Psoas muscle (tissue), 8 donors: ENCODE measurements at regions of chr12 and their contacts with region 1.

Region 1: DNA sequence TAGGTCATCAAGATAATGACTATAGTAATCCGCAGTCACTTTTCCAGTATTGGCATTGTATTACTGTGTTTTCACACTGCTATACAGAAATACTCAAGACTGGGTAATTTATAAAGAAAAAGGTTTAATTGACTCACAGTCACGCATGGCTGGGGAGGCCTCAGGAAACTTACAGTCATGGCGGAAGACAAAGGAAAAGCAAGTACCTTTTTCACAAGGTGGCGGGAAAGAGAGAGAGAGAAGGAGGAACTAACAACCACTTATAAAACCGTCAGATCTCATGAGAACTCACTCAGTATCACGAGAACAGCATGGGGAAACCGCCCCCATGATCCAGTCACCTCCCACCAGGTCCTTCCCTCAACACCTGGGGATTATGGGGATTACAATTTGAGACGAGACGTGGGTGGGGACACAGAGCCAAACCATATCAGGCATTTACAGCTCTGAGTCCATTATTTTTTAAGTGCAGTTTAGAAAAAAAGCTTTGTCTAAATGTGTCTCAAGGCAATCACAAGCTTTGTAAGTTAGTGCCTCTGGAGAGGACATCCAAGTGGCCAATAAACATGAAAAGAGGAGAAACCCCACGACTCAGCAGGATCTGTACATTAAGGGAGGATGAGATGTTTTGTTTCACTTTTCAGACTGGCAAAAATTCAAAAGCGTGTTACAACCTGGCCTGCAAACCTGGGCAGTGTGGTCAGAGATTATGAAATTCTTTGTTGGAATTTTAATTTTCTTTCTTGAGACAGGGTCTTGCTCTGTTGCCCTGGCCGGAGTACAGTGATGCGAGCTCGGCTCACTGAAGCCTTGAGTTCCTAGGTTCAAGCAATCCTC is 82.0 kb downstream of the DNAH10 start:
- DNase-seq: no peak
- ATAC-seq: no peak
- H3K4me3 ChIP-seq: no peak overlapping the region
- H3K27ac ChIP-seq: no peak overlapping the region
- H3K4me1 ChIP-seq: no peaks in the 10 kb centered on the region
- H3K27me3 ChIP-seq: no peaks in the 10 kb centered on the region
- CTCF ChIP-seq: no peak

Region 2: GRCh38 chr12:122304902-122305301 is 1539.2 kb before region 1 on chr12:
- intact Hi-C with region 1: loop called in 1 of 2 experiments (anchors 5 kb)
- DNase-seq: no peak
- ATAC-seq: no peak
- H3K4me3 ChIP-seq: no peak overlapping the region
- H3K27ac ChIP-seq: no peak overlapping the region
- H3K4me1 ChIP-seq: no peaks in the 10 kb centered on the region
- H3K27me3 ChIP-seq: no peaks in the 10 kb centered on the region
- CTCF ChIP-seq: no peak

Region 3: GRCh38 chr12:124680863-124681778 is 837.0 kb after region 1 on chr12:
- intact Hi-C with region 1: loop called in 1 of 2 experiments (anchors 5 kb)
- DNase-seq: peak; percentile 73 to 80
- ATAC-seq: peak; percentile 14 to 72 (median 58)
- H3K4me3 ChIP-seq: no peak overlapping the region
- H3K27ac ChIP-seq: peak overlapping the region; percentile 82
- H3K4me1 ChIP-seq: peaks cover 54% of the 10 kb centered on the region
- H3K27me3 ChIP-seq: no peaks in the 10 kb centered on the region
- CTCF ChIP-seq: peak; percentile 31